ENCODE measurements at regions of chr11 and their contacts with region 1.

Region 1: DNA sequence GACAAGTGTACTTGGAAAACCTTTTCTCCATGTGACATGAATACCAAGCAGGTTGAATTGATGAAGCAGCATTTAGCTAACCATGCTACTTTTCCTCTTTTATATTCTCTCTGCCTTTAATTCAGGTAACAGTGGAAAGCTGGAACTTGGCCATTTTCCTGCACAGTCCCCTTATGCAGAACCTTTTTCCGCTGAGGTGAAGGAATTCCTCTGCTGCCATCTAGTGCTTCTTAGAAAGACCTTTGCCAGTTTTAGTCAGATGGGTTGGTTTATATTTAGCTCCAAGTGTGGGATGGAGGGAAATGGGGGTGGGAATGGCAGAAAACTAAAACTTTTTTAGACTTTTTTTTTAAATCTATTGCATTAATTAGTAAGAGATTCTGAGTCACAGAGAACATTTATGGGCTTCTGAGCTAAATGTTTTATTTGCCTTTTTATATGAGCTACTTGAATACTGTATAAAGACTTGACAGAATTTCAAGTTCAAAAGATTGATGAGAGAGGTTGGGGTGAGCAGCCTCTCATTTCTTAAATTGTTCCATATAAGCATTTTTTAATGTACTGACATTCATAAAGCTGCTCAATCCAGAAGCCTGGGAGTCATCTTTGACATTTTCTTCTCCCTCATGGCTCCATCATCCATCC is 153.9 kb upstream of the ZC3H12C start:
- DNase-seq: peak; percentile 86
- H3K4me3 Mint-ChIP-seq: no peak overlapping the region
- H3K27ac Mint-ChIP-seq: no peak overlapping the region
- H3K4me1 Mint-ChIP-seq: peaks cover 14% of the 10 kb centered on the region
- H3K27me3 Mint-ChIP-seq: no peaks in the 10 kb centered on the region
- CTCF ChIP-seq: peak; percentile 64

Region 2: GRCh38 chr11:108664730-108665525 is 1274.4 kb before region 1 on chr11 and contains the start of gene DDX10:
- CTCF ChIA-PET with region 1: interaction called, 10 read pairs
- POLR2A ChIA-PET with region 1: interaction called, 16 read pairs
- intact Hi-C with region 1: no loop called
- DNase-seq: peak; percentile 99
- H3K4me3 Mint-ChIP-seq: peak within 1 kb of the TSS; percentile 91
- H3K27ac Mint-ChIP-seq: peak within 1 kb of the TSS; percentile 91
- H3K4me1 Mint-ChIP-seq: peaks cover 23% of the 10 kb centered on the region
- H3K27me3 Mint-ChIP-seq: no peaks in the 10 kb centered on the region
- CTCF ChIP-seq: no peak
- total RNA-seq, gene DDX10: 94.4 and 113 TPM in 2 replicates

Region 3: DNA sequence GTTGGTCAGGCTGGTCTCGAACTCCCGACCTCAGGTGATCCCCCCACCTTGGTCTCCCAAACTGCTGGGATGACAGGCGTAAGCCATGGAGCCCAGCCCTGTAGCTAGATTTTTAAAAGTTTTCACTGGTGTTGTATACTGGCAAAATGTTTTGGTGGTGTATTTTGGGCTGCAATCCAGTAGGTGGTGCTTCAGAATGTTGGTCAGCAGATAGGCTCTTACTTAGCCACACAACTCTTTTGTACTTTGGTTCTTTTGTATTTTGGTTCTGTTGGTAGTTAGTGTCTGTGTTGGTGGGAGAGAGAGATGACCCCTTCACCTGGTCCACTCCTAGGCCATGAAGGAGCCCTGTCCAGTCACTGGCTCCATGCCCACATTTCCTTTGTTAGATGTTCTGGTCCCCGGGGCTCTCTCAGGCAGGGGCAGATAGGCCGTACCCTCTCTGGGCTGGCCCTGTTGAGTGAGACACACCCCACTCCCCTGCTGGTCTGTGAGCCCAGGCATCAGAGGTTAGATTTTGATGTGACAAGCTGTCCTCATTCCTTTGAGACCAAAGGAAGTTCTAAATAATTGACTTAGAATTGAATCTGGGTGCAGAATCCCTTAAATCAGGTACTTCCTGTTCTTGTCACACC is 1150.6 kb before region 1 on chr11:
- CTCF ChIA-PET with region 1: interaction called, 3 read pairs
- POLR2A ChIA-PET with region 1: no interaction called
- intact Hi-C with region 1: loop called (anchors 5 kb)
- DNase-seq: peak; percentile 40
- H3K4me3 Mint-ChIP-seq: no peak overlapping the region
- H3K27ac Mint-ChIP-seq: peak overlapping the region; percentile 39
- H3K4me1 Mint-ChIP-seq: peaks cover 9% of the 10 kb centered on the region
- H3K27me3 Mint-ChIP-seq: no peaks in the 10 kb centered on the region
- CTCF ChIP-seq: peak; percentile 42

Region 4: DNA sequence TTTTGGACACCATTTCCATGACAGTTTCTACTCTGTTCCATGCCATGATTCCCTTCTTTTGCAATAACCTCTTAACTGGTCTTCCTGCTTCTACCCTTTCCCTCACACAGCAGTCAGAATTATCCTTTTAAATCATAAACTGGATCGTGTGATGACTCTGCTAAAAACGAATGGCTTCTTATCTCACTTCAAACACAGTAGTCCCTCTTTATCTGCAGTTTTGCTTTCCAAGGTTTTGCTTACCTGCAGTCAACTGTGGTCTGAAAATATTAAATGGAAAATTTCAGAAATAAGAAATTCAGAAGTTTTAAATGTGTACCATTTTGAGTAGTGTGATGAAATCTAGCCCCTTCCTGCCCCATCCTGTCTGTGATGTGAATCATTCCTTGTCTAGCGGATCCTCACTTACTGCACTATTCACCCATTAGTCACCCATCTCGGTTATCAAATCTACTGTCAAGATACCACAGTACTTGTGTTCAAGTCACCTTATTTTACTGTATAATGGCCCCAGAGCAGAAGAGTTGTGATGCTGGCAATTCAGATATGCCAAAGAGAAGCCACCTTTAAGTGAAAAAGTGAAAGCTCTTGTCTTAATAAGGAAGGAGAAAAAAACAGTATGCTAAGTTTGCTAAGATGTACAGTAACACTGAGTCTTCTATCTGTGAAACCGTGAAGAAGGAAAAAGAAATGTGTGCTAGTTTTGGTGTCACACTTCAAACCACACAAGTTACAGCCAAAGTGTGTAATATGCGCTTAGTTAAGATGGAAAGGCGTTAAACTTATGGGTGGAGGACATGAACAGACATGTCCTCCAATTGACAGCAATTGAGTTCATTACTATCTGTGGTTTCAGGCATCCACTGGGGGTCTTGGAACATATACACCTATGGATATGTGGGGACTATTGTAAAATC is 991.4 kb before region 1 on chr11:
- CTCF ChIA-PET with region 1: no interaction called
- POLR2A ChIA-PET with region 1: no interaction called
- intact Hi-C with region 1: loop called (anchors 10 kb)
- DNase-seq: peak; percentile 68
- H3K4me3 Mint-ChIP-seq: no peak overlapping the region
- H3K27ac Mint-ChIP-seq: peak overlapping the region; percentile 49
- H3K4me1 Mint-ChIP-seq: peaks cover 25% of the 10 kb centered on the region
- H3K27me3 Mint-ChIP-seq: no peaks in the 10 kb centered on the region
- CTCF ChIP-seq: no peak

Region 5: GRCh38 chr11:109853156-109853776 is 86.0 kb before region 1 on chr11:
- CTCF ChIA-PET with region 1: interaction called, 116 read pairs
- POLR2A ChIA-PET with region 1: interaction called, 19 read pairs
- intact Hi-C with region 1: loop called (anchors 1 kb)
- DNase-seq: peak; percentile 73
- H3K4me3 Mint-ChIP-seq: no peak overlapping the region
- H3K27ac Mint-ChIP-seq: no peak overlapping the region
- H3K4me1 Mint-ChIP-seq: peaks cover 8% of the 10 kb centered on the region
- H3K27me3 Mint-ChIP-seq: no peaks in the 10 kb centered on the region
- CTCF ChIP-seq: peak; percentile 63

Region 6: DNA sequence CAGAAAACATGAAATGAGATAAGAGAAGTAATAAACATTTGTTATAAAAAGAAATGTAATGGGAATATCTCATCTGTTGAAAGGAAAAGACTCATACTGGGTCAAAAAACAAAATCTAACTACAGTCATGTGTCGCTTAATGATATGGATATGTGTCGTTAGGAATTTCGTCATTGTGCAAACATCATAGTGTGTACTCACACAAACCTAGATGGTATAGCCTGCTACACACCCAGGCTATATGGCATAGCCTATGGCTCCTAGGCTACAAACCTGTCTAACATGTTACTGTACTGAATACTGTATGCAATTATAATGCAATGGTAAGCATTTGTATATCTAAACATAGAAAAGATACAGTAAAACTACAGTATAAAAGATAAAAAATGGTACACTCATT is 64.1 kb after region 1 on chr11:
- CTCF ChIA-PET with region 1: no interaction called
- POLR2A ChIA-PET with region 1: no interaction called
- intact Hi-C with region 1: no loop called
- DNase-seq: no peak
- H3K4me3 Mint-ChIP-seq: no peak overlapping the region
- H3K27ac Mint-ChIP-seq: no peak overlapping the region
- H3K4me1 Mint-ChIP-seq: peaks cover 9% of the 10 kb centered on the region
- H3K27me3 Mint-ChIP-seq: no peaks in the 10 kb centered on the region
- CTCF ChIP-seq: no peak

Region 7: DNA sequence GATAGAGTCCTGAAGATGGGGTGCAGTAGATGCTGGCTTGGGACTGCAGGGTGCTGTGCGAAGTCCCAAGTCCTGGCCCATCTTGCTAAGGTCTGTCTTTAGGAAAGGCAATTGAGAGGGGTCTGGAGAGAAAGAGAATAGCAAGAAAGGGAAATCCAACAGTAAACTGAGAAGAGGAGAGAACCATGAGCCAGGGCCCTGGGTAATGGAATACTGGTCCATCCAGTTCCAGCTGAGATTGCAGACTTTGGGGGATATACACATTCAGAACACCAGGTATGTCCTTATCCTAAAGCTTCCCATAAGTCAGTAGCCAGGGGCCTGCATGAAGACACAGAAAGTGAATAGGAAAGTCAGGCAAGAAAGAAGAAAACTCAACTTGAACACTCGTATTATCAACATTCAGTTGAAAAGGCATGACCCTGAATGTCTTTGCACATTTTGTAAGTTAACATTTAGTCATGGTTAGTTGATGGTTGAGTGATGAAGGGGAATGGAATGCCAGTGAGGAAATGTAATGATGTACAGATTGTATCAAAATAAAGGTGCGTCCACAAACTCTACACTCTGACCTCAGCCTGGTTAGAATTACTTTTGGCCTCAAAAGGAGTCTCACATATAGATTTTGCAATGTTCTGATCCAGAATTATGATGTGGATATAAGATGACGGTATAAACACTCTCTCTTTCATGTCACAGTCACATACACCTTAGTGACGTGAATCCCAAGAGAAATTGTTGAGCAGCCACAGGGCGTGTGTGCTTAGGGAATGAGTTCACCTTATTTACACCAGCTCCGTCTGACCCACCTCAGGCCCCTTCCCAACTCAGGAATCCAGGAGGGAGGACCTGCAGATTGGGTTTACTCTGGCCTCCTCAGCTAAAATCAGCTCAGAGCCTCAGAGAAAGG is 256.8 kb after region 1 on chr11:
- CTCF ChIA-PET with region 1: interaction called, 4 read pairs
- POLR2A ChIA-PET with region 1: interaction called, 10 read pairs
- intact Hi-C with region 1: no loop called
- DNase-seq: peak; percentile 95
- H3K4me3 Mint-ChIP-seq: peak overlapping the region; percentile 47
- H3K27ac Mint-ChIP-seq: peak overlapping the region; percentile 99
- H3K4me1 Mint-ChIP-seq: peaks cover 58% of the 10 kb centered on the region
- H3K27me3 Mint-ChIP-seq: no peaks in the 10 kb centered on the region
- CTCF ChIP-seq: no peak